ENCODE measurements at regions of chr4 and their contacts with region 1.

Region 1: DNA sequence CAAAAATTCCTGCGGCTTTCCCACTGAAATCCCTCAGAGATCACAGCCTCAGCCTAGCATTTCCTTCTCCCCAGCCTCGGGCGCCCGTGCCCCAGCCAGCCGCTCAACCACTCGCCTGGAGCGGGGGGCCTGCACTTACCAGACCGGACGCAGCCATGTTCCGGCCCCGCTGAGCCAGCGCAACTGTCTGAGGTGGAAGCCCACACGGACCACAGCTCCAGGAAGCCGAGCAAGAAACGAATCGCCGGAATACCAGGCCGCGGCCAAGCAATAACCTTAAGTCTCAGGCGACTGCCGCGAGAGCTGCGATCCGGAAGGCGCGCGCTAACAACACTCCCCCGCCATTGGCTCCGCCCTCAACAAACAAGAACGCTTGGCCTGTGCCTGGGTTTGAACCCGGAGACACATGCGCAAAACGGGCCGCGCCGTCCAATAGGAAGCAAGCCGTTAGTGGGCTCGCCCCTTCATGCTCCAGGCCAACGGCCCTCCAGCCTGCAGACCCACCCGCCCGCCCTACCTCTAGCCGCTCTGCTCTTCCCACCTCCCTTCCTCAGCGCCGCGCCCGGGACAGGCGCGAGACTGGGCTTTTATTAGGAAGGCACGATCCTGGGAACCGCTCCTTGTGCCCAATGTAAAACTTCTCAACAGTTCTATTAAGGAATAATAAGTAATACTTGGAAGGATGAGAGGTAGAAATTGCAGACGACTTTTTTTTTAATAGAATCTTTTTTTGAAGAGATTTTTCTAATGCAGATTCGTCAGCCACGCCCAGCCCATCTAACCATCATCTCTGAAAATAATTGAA is at the start of gene CENPC:
- DNase-seq: peak; percentile 98
- H3K4me3 ChIP-seq: peak within 1 kb of the TSS; percentile 91
- H3K27ac ChIP-seq: peak within 1 kb of the TSS; percentile 87
- H3K4me1 ChIP-seq: peaks cover 58% of the 10 kb centered on the region
- CTCF ChIP-seq: no peak
- total RNA-seq, gene CENPC: 46.2 and 47.4 TPM in 2 replicates

Region 2: GRCh38 chr4:67288964-67289363 is 256.4 kb before region 1 on chr4:
- CTCF ChIA-PET with region 1: no interaction called
- POLR2A ChIA-PET with region 1: no interaction called
- intact Hi-C with region 1: no loop called
- DNase-seq: peak; percentile 18
- H3K4me3 ChIP-seq: no peak overlapping the region
- H3K27ac ChIP-seq: no peak overlapping the region
- H3K4me1 ChIP-seq: no peaks in the 10 kb centered on the region
- CTCF ChIP-seq: peak; percentile 71

Region 3: DNA sequence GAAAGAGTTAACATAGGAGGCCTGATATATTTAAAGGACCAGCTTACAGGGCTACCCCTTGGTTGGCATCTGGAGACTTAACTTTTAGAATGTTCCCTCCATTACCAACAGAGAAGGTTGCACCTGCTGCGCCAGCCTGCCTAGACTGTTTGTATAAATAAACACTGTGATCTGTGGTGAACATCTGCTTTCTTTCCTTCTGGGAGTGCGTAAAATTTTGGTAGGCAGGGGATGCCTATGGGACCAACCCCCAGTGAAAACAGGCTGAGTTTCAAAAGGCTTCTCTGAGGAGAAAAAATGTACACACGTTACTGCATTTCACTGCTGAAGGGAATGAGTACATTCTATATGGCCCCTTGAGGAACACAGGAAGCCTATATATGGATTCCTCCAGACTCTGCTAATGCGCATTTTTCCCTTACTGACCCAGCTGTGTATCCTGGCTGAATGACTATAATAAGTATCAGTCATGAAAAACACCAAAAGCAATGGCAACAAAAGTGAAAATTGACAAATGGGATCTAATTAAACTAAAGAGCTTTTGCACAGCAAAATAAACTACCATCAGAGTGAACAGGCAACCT is 13.9 kb before region 1 on chr4:
- CTCF ChIA-PET with region 1: no interaction called
- POLR2A ChIA-PET with region 1: interaction called, 15 read pairs
- intact Hi-C with region 1: no loop called
- DNase-seq: no peak
- H3K4me3 ChIP-seq: no peak overlapping the region
- H3K27ac ChIP-seq: no peak overlapping the region
- H3K4me1 ChIP-seq: no peaks in the 10 kb centered on the region
- CTCF ChIP-seq: no peak

Region 4: GRCh38 chr4:67575232-67575888 is 30.0 kb after region 1 on chr4:
- CTCF ChIA-PET with region 1: interaction called, 4 read pairs
- POLR2A ChIA-PET with region 1: interaction called, 23 read pairs
- intact Hi-C with region 1: no loop called
- DNase-seq: peak; percentile 90
- H3K4me3 ChIP-seq: peak overlapping the region; percentile 61
- H3K27ac ChIP-seq: peak overlapping the region; percentile 99
- H3K4me1 ChIP-seq: peaks cover 66% of the 10 kb centered on the region
- CTCF ChIP-seq: no peak

Region 5: DNA sequence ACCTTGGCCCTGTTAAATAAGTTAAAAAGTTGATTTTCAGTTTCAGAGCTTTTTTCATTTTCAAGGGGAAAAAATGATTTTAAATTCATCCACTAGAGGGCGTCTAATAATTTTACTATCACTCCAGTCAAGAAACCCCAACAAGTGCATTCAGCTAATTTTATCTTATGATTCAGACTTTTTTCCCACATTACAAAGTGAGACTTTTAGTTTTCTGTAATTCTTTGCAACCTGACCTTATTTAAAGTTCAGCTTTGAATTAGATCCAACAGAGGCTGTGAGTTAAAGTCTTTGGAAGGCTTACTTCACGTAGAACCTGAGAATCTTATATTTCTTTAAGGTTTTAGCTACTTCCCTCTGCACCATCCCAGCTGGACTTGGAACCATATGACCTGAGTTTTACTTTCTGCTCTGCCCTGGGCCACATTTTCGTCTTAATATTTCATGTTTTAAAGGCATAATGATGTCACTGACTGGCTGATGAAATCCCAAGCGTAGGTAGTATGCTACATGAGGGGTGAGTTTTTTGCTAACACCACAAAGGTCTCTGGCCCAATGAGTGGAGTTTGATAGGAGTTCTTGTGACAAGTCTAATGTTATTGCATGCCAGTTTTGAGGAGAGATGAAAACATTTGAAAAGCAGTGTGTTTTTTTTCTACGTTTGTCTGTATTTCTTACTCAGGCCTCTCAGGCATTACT is 201.5 kb after region 1 on chr4:
- CTCF ChIA-PET with region 1: no interaction called
- POLR2A ChIA-PET with region 1: interaction called, 3 read pairs
- intact Hi-C with region 1: loop called (anchors 2 kb)
- DNase-seq: peak; percentile 67
- H3K4me3 ChIP-seq: no peak overlapping the region
- H3K27ac ChIP-seq: no peak overlapping the region
- H3K4me1 ChIP-seq: no peaks in the 10 kb centered on the region
- CTCF ChIP-seq: peak; percentile 90

Region 6: DNA sequence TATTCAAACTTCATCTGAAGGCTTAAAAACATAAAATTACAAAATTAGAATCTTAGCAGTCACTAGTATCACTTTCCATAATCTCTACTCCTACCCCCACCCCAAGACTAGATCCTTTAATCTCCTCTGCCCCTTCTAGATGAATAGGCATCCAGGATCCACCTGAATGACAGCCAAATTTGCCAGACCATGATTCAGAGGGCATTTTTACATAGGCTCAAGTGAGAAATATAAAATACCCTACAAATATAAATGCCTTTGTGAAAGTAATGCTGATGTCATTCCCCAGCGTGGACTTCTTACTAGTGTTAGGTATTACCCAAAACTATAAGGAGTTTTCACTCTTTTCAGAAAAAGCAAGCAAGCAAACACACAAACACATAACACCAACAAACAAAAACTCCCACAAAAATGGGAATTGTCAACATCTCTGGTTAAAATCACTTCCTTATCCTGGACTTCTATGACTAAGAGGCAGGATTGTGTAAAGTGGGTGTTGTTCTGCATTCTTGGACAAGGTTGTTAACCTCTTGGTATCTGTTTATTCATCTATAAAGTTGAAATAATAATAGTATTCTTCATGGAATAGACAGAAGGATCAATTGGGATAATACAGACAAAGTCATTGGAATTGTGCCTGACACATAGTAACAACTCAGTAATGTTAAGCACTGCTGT is 635.6 kb after region 1 on chr4:
- CTCF ChIA-PET with region 1: no interaction called
- POLR2A ChIA-PET with region 1: no interaction called
- intact Hi-C with region 1: no loop called
- DNase-seq: no peak
- H3K4me3 ChIP-seq: no peak overlapping the region
- H3K27ac ChIP-seq: no peak overlapping the region
- H3K4me1 ChIP-seq: no peaks in the 10 kb centered on the region
- CTCF ChIP-seq: no peak

Region 7: GRCh38 chr4:68349649-68350360 is 804.4 kb after region 1 on chr4 and contains the start of gene YTHDC1:
- CTCF ChIA-PET with region 1: no interaction called
- POLR2A ChIA-PET with region 1: no interaction called
- intact Hi-C with region 1: loop called (anchors 10 kb)
- DNase-seq: peak; percentile 95
- H3K4me3 ChIP-seq: peak within 1 kb of the TSS; percentile 95
- H3K27ac ChIP-seq: peak within 1 kb of the TSS; percentile 70
- H3K4me1 ChIP-seq: peaks cover 16% of the 10 kb centered on the region
- CTCF ChIP-seq: no peak
- total RNA-seq, gene YTHDC1: 62.4 and 65.3 TPM in 2 replicates

Measured in OCI-LY7 (cell line).